ENCODE measurements at regions of chr18 and their contacts with region 1.

Region 1: GRCh38 chr18:3593904-3594661 is 144.1 kb downstream of the TGIF1 start:
- DNase-seq: peak; percentile 93
- H3K4me3 Mint-ChIP-seq: peak overlapping the region; percentile 93
- H3K27ac Mint-ChIP-seq: peak overlapping the region; percentile 100
- H3K4me1 Mint-ChIP-seq: peaks cover 52% of the 10 kb centered on the region
- H3K27me3 Mint-ChIP-seq: no peaks in the 10 kb centered on the region

Region 2: DNA sequence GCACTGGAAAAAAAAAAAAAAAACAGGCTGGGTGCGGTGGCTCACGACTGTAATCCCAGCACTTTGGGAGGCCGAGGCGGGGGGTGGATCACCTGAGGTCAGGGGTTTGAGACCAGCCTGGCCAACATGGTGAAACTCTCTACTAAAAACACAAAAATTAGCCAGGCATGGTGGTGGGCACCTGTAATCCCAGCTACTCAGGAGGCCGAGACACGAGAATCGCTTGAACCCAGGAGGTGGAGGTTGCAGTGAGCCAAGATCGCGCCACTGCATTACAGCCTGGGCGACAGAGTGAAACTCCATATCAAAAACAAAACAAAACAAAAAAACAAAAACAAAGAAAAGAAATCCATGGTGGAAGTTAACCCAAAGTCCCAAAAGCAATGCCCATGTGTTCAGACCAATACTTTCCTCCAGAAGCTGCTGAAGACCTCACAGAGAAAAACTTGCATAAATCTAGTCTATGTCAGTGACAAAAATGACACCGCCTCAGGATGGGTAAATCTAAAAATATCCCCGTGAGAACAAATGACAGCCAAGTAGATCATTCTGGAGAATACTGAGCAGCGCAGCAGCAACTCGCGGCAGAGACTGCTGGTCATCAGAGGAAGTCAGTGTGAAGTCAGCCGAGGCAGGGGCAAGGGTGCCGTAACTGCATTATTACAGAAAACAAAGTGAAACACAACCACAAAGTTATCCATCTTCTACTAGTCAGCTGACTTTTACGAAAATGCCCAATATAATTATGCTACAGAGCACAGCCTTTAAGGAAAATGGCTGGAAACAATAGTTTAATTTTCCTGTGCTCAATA is 622.1 kb before region 1 on chr18:
- CTCF ChIA-PET with region 1: interaction called, 4 read pairs
- POLR2A ChIA-PET with region 1: no interaction called
- intact Hi-C with region 1: loop called (anchors 2 kb)
- DNase-seq: peak; percentile 87
- H3K4me3 Mint-ChIP-seq: peak overlapping the region; percentile 79
- H3K27ac Mint-ChIP-seq: peak overlapping the region; percentile 100
- H3K4me1 Mint-ChIP-seq: peaks cover 92% of the 10 kb centered on the region
- H3K27me3 Mint-ChIP-seq: no peaks in the 10 kb centered on the region

Region 3: DNA sequence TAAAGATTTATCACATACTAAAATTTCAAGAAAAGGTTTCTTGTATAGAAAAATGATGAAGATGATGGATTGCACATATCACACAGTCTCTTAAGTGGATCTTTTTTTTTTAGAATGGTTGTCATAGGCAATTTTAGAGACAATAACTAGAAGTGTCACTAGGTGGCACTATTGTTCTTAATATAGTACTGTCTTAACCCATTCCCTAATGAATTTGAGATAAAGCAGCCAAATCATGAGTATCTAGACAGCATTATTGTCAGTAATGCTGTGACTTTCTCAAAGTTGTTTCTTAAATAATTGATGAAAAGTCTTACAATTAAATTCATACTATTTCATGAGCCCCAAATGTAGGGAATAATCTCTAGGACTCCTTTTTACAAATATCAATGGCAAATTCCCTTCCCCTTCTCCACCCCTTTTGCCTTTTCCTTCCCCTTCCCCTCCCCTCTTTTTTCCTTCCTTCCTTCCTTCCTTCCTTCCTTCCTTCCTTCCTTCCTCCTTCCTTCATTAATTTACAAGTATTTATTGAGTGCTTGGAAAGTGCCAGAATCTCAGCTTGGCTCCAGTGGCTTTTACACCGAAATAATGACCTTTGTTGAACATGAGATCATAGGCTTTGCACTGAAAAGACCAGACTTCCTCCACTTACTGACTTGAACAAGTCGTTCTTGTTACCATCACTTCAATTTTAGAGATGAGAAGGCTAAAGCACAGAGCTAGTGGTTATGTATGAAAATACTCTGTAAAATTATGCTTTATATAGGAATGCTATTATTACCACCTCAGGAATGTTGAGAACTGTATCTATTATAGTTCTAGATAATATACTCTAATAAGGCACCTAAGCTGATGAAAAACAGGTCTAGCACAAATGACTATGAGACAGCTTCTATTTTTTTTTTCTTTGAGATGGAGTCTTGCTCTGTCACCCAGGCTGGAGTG is 312.4 kb before region 1 on chr18:
- CTCF ChIA-PET with region 1: interaction called, 25 read pairs
- POLR2A ChIA-PET with region 1: no interaction called
- intact Hi-C with region 1: loop called (anchors 1 kb)
- DNase-seq: no peak
- H3K4me3 Mint-ChIP-seq: no peak overlapping the region
- H3K27ac Mint-ChIP-seq: no peak overlapping the region
- H3K4me1 Mint-ChIP-seq: peaks cover 6% of the 10 kb centered on the region
- H3K27me3 Mint-ChIP-seq: no peaks in the 10 kb centered on the region

Region 4: GRCh38 chr18:3380384-3380961 is 213.6 kb before region 1 on chr18:
- CTCF ChIA-PET with region 1: interaction called, 30 read pairs
- POLR2A ChIA-PET with region 1: interaction called, 5 read pairs
- intact Hi-C with region 1: loop called (anchors 1 kb)
- DNase-seq: peak; percentile 57
- H3K4me3 Mint-ChIP-seq: no peak overlapping the region
- H3K27ac Mint-ChIP-seq: no peak overlapping the region
- H3K4me1 Mint-ChIP-seq: peaks cover 9% of the 10 kb centered on the region
- H3K27me3 Mint-ChIP-seq: peaks cover 13% of the 10 kb centered on the region

Region 5: GRCh38 chr18:3454365-3455089 is 139.6 kb before region 1 on chr18:
- CTCF ChIA-PET with region 1: interaction called, 112 read pairs
- POLR2A ChIA-PET with region 1: interaction called, 90 read pairs
- intact Hi-C with region 1: loop called (anchors 1 kb)
- DNase-seq: no peak
- H3K4me3 Mint-ChIP-seq: peak overlapping the region; percentile 86
- H3K27ac Mint-ChIP-seq: peak overlapping the region; percentile 100
- H3K4me1 Mint-ChIP-seq: peaks cover 62% of the 10 kb centered on the region
- H3K27me3 Mint-ChIP-seq: no peaks in the 10 kb centered on the region

Region 6: GRCh38 chr18:3604498-3605408 is 10.7 kb after region 1 on chr18:
- CTCF ChIA-PET with region 1: interaction called, 37 read pairs
- POLR2A ChIA-PET with region 1: interaction called, 34 read pairs
- intact Hi-C with region 1: loop called (anchors 1 kb)
- DNase-seq: peak; percentile 58
- H3K4me3 Mint-ChIP-seq: no peak overlapping the region
- H3K27ac Mint-ChIP-seq: no peak overlapping the region
- H3K4me1 Mint-ChIP-seq: peaks cover 15% of the 10 kb centered on the region
- H3K27me3 Mint-ChIP-seq: no peaks in the 10 kb centered on the region

Region 7: GRCh38 chr18:3665780-3666525 is 71.9 kb after region 1 on chr18:
- CTCF ChIA-PET with region 1: interaction called, 78 read pairs
- POLR2A ChIA-PET with region 1: interaction called, 8 read pairs
- intact Hi-C with region 1: loop called (anchors 1 kb)
- DNase-seq: peak; percentile 81
- H3K4me3 Mint-ChIP-seq: no peak overlapping the region
- H3K27ac Mint-ChIP-seq: no peak overlapping the region
- H3K4me1 Mint-ChIP-seq: peaks cover 23% of the 10 kb centered on the region
- H3K27me3 Mint-ChIP-seq: no peaks in the 10 kb centered on the region